Activated T-helper 1 cell treated with anti-CD3 and anti-CD28 coated beads, Interleukin-12 subunit alpha, Interleukin-12 subunit beta, Interleukin-2, Interleukin-4 antibody, amounts not matched to agents 30 ng/mL and 10 ng/mL and 1 ng/mL, durations not matched to agents 14 hours and 24 hours and 36 hours (primary cell): ENCODE measurements at regions of chr1 and their contacts with region 1.

Region 1: DNA sequence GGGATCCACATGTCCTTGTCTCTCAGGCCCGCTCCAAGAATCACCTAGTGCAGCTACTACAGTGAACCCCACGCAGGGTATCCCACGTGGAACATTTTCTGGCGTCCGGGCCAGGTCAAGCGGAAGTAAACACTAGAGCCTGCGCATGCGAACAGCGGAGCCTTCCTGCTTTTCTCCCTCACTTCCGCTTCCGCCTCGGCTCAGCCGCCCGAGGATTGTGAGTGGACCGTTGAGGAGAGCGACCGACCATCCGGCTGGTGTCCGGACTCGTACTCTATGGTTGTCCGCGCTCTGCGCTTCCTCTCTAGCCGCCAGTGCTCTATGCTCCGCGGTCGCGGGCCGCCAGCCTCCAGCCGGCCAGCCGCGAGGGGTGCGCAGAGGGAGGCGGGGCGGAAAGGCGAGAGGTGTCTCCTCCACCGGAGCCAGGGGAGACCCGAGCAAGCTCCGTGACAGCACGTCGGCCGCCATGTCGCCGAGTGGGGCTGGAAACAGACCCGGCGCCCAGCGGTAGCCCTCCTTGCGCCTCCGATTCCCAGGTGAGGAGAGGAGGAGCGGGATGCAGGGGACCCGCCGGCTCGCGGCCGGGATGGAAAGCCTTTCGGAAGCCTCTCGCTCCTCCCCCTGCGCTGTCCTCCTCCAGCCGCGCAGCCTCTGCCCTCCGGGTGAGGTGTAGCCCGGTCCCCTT is at the starts of genes CNST and TFB2M:
- DNase-seq: peak; percentile 93
- H3K4me3 Mint-ChIP-seq: peak within 1 kb of the TSS; percentile 98
- H3K27ac Mint-ChIP-seq: peak within 1 kb of the TSS; percentile 99
- H3K4me1 Mint-ChIP-seq: peaks cover 48% of the 10 kb centered on the region
- H3K27me3 Mint-ChIP-seq: no peaks in the 10 kb centered on the region
- total RNA-seq, gene CNST: 27.0 and 30.8 TPM in 2 replicates
- total RNA-seq, gene TFB2M: 24.8 and 30.9 TPM in 2 replicates

Region 2: DNA sequence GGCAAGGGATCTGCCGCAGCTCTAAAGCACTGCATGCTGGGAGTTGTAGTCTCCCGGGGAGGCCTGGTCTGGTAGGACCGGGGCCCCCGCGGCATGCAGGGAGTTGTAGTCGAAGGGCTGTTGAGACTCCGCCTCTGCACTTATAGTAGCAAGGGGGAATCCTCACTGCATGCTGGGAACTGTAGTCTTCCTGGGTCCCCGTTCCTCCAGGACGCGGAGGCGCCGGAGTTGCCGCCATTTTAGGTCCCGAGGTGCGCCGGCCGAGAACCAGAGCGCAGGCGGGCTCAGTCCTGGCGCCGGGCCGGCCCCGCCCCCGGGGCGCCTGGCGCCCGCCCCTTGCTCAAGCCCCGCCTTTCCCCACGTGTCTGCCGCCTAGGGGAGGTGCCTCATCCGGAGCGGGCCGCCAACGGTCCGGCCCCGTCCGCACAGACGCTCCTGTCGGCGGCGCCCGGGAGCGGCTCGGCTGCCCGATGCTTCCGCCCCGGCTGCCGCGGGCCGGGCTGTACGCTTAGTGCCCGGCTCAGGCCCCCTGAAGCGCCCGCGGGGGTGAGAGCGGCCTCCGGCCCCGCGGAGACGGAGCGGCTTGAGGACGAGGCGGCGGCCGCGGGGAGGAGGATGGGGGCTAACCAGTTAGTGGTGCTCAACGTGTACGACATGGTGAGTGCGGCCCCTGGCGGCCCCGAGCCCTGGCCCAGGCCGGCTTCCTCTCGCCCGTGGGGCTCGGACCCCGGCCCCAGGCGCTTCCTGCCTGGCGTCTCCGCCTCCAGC is 1913.4 kb before region 1 on chr1 and contains the start of gene DESI2:
- intact Hi-C with region 1: loop called (anchors 1 kb)
- DNase-seq: peak; percentile 98
- H3K4me3 Mint-ChIP-seq: peak within 1 kb of the TSS; percentile 83
- H3K27ac Mint-ChIP-seq: peak within 1 kb of the TSS; percentile 75
- H3K4me1 Mint-ChIP-seq: peaks cover 18% of the 10 kb centered on the region
- H3K27me3 Mint-ChIP-seq: no peaks in the 10 kb centered on the region
- total RNA-seq, gene DESI2: 31.1 and 32.8 TPM in 2 replicates

Region 3: DNA sequence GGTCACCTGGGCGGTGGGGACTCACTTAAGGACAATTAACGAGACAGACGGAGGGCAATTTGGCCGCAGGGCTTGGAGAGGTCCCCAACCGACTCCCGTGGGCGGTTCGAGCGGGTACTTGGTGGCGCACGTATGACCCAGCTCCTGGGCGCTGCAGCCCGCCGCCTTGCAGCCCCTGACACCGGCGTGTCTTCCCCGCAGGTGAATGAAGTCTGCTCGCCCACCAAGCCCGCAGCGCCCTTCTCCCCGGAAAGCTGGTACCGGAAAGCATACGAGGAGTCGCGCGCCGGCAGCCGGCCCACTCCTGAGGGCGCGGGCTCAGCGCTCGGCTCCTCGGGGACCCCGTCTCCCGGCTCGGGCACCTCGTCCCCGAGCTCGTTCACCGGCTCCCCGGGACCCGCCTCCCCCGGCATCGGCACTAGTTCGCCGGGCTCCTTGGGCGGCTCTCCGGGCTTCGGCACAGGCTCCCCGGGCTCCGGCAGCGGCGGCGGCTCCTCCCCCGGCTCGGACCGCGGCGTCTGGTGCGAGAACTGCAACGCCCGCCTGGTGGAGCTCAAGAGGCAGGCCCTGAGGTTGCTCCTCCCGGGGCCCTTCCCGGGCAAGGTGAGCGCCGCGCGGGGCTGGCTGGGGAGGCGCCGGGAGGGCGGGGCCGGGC is 1410.1 kb before region 1 on chr1:
- intact Hi-C with region 1: loop called (anchors 5 kb)
- DNase-seq: peak; percentile 78
- H3K4me3 Mint-ChIP-seq: peak overlapping the region; percentile 77
- H3K27ac Mint-ChIP-seq: no peak overlapping the region
- H3K4me1 Mint-ChIP-seq: peaks cover 13% of the 10 kb centered on the region
- H3K27me3 Mint-ChIP-seq: peaks cover 62% of the 10 kb centered on the region

Region 4: DNA sequence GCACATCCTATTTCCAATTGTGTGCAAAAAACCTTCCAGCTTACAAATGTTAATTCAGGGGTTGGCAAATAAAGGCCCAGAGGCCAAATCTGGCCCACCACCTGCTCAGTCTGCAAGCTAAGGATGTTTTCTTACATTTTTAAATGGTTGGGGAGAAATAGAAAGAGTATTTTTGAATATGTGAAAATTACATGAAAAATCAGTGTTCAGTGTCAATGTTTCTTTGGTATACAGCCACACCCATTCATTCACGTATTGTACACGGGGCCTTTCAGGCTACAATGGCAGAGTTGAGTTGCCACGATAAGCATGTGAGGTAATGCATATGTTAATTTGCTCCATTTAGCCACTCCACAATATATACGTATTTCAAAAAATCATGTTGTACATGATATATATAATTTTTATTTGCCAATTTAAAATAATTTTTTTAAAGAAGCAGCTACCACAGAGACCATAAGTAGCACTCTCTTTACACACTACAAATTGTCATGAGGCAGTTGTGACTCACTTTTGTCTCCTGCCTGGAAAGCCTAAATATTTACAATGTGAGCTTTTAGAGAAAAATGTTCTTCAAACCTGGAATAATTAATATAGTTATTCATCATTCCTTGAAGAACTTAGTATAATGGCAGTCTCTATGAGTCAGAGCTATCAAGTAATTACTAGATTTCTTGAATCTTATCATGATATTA is 248.8 kb before region 1 on chr1:
- intact Hi-C with region 1: no loop called
- DNase-seq: no peak
- H3K4me3 Mint-ChIP-seq: no peak overlapping the region
- H3K27ac Mint-ChIP-seq: no peak overlapping the region
- H3K4me1 Mint-ChIP-seq: no peaks in the 10 kb centered on the region
- H3K27me3 Mint-ChIP-seq: no peaks in the 10 kb centered on the region

Region 5: DNA sequence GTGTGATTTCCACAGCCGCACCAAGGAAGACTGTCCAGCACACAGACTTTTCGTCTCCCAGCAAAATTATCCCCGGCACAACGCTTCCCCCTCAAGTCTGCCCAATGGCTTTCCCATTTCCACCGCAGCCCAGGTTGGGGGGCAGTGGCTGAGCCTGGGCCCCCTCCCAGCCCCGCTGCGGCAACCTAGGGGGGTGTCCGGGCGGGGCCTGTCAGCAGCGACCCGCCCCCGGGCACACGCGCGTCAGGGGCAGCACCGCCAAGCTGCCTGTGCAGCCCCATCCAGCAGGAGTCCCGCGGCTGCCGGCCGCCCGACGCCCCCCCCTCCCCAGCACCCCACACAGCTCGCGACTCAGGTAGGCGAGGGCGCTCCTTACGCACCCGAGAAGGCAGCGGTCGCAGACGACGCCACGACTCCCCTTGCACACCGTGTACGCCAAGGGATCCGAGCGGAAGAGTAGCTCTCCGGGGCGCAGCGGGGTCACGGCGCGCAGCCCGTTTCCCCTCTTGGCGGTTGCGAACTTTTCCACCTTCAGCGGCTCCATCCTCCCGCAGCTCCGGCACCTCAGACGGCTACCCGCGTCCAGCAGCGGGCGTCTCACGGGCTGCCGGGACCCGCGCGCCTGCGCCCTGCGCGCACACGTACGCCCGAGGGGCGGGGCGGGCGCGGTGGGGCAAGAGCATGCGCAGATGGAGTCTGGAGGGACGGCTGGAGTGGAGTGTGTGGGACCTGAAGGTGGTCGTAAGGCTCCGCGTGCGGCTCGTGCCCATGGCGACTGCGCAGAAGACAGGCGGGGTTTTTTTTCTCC is 59.4 kb before region 1 on chr1 and contains the start of gene SMYD3:
- intact Hi-C with region 1: loop called (anchors 1 kb)
- DNase-seq: peak; percentile 71
- H3K4me3 Mint-ChIP-seq: peak within 1 kb of the TSS; percentile 97
- H3K27ac Mint-ChIP-seq: peak within 1 kb of the TSS; percentile 84
- H3K4me1 Mint-ChIP-seq: peaks cover 26% of the 10 kb centered on the region
- H3K27me3 Mint-ChIP-seq: no peaks in the 10 kb centered on the region
- total RNA-seq, gene SMYD3: 21.7 and 21.8 TPM in 2 replicates

Region 6: DNA sequence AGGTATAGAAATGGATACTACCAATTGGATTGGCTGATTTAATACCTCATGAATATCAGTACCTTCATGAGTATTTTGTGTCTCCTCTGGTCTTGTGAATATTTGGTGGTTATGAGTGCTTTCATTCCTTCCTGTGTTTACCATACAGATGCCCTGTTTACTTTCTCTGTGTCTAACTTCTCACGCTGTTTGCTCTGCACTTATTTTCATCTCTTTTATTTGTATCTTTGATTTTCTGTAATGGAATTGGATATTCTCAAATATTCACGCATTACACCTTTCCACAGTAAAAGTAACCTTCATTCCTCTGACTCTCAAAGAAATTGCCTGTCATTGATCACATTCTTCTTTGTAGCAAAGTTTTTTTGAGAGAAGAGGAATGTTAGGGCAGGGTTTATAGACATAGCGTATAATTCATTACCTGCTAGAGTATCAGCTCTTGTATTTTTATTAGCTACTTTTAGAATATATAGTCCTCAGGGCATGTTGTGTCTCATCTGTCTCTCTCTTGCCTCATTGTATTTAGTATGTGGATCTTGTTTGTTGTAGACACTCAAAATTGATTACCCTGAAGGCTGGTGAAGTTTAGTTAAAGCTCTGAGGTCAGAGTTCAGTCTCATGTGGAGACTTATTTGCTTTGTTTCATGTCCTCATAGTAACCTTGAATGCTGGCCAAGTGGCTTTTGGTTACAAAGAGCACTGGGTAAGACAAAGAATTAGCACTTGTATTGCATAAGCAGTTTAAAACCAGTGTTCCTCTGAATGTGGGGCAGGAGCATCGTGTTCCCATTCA is 17.0 kb after region 1 on chr1:
- intact Hi-C with region 1: no loop called
- DNase-seq: no peak
- H3K4me3 Mint-ChIP-seq: no peak overlapping the region
- H3K27ac Mint-ChIP-seq: no peak overlapping the region
- H3K4me1 Mint-ChIP-seq: peaks cover 23% of the 10 kb centered on the region
- H3K27me3 Mint-ChIP-seq: no peaks in the 10 kb centered on the region

Region 7: GRCh38 chr1:246893191-246893939 is 327.1 kb after region 1 on chr1:
- intact Hi-C with region 1: loop called (anchors 5 kb)
- DNase-seq: no peak
- H3K4me3 Mint-ChIP-seq: no peak overlapping the region
- H3K27ac Mint-ChIP-seq: peak overlapping the region; percentile 70
- H3K4me1 Mint-ChIP-seq: peaks cover 17% of the 10 kb centered on the region
- H3K27me3 Mint-ChIP-seq: no peaks in the 10 kb centered on the region

Region 8: GRCh38 chr1:247331172-247331991 is 765.1 kb after region 1 on chr1 and contains the start of gene ZNF496:
- intact Hi-C with region 1: loop called (anchors 10 kb)
- DNase-seq: peak; percentile 65
- H3K4me3 Mint-ChIP-seq: peak within 1 kb of the TSS; percentile 92
- H3K27ac Mint-ChIP-seq: peak within 1 kb of the TSS; percentile 90
- H3K4me1 Mint-ChIP-seq: peaks cover 21% of the 10 kb centered on the region
- H3K27me3 Mint-ChIP-seq: no peaks in the 10 kb centered on the region
- total RNA-seq, gene ZNF496: 13.8 and 14.8 TPM in 2 replicates